ENCODE measurements at regions of chr17 and their contacts with region 1.

Region 1: DNA sequence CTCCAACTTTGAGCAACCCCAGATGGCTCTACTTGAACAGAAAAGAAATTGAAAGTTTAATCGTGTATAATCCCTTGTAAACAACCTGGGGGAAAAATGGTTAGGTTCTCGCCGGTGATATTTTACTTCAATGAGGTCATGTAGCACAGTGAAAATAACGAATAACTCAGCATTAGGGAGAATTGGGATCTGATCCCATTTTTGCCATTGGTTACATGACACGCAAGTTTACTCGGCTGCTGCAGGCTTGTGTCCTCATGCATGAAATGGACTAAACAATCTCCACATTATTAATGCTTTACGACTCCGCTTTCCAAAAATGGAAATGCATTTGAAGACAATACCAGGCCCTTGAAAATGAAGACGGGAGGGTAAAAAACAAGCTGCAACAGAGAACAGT is 45.5 kb upstream of the LRRC37A3 start:
- DNase-seq: no peak

Region 2: GRCh38 chr17:64920026-64920418 is 44.8 kb before region 1 on chr17:
- intact Hi-C with region 1: loop called (anchors 2 kb)
- DNase-seq: no peak

Region 3: DNA sequence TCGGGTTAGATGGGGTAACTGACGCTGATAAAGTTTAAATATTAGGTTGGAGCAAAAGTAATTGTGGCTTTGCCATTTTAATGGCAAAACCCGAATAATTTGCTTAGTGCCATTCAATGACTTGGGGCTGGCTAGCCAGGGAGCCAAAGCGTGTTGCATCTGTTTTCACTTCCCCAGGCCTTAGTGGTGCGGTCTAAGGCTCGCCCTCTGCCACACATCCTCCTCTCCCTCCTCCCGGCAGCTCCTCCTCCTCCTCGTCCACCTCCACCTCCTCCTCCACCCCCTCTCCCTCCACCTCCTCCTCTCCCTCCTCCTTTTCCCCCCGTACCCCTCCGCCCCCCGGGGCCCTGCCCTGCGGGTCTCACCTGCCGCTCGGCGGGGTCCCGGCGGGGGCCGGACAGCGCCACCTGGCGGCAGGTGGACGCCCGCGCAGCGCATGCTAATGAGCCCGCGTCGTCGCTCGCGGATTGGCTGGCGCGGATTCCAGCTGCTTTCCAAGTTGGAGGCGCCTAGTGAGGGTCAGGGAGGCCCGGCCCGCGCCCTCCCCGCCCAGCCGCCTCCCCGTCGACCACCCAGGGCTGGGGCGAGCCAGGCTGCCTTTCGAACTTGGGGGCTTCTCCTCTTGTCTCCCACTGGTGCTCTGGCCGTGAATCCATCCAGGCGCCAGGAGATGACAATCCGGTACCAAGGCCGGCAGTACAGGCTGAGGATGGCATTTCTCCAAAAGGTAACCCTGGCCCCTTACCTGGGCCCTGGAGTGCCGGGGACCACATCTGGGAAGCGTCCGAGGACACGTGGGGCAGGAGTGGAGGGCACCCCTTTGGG is 135.7 kb after region 1 on chr17:
- intact Hi-C with region 1: loop called (anchors 5 kb)
- DNase-seq: peak; percentile 96